Endothelial cell of umbilical vein (primary cell): ENCODE measurements at regions of chr11 and their contacts with region 1.

Region 1: GRCh38 chr11:57456960-57457642 is 3.2 kb upstream of the RTN4RL2 start:
- DNase-seq: peak; percentile 79
- H3K4me3 ChIP-seq: no peak overlapping the region
- H3K27ac ChIP-seq: no peak overlapping the region
- H3K4me1 ChIP-seq: peaks cover 14% of the 10 kb centered on the region
- H3K27me3 ChIP-seq: peaks cover 29 to 39% of the 10 kb centered on the region in 2 experiments
- CTCF ChIP-seq: peak; percentile 92 to 99
- POLR2A ChIP-seq: no peak

Region 2: DNA sequence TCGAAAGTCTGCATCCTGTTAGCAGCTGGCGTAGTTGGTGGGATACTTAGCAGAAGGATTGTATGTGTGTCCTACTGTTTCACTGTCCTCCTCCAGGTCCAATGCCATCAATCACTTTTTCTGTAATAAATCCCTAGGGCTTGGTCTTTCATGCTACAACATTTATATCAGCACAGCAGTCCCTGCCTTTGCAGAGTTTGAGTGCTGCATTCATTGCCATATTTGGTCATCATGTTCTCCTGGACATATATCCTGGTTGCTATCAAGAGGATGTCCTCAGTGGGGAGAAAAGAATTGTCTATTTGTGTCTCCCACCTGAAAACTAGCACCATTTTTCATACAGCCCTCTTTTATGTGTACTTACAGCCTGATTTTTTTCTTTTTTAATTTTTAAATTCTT is 401.3 kb before region 1 on chr11:
- CTCF ChIA-PET with region 1: no interaction called
- POLR2A ChIA-PET with region 1: no interaction called
- dilution Hi-C with region 1: no loop called
- intact Hi-C with region 1: no loop called
- DNase-seq: no peak
- H3K4me3 ChIP-seq: no peak overlapping the region
- H3K27ac ChIP-seq: no peak overlapping the region
- H3K4me1 ChIP-seq: no peaks in the 10 kb centered on the region
- H3K27me3 ChIP-seq: peaks cover 2 to 3% of the 10 kb centered on the region in 2 experiments
- CTCF ChIP-seq: no peak
- POLR2A ChIP-seq: no peak

Region 3: DNA sequence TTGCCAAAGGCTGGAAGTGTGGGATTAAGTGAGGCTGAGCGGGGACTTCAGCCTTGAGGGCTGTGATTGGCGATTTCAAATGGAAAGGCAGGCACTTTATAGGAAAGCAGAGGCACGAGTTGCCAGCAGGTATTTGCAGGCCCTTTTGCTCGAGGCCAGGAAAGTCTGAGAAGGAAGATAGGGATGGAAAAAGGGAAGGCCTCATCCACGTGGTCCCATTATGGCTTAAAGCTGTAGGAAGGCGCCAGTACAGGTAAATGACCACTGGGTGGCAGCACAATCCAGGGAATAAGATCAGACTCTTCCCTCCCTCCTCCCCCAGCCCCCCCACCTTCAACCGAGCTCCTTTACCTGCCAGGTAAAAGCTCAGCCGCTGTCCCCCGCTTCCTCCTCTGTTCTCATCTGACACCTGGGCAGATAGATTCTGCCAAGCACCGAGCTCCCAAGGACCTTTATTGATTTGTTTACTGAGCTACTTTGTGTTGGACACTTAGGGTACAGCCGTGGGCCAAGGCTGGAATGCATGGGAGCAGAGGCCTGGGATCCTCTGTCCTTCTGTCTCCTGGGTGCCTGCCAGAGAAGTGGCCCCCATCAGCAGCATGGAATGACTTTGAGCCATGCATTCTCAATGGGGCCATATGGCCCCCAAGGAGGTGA is 111.4 kb before region 1 on chr11:
- CTCF ChIA-PET with region 1: interaction called, 57 read pairs
- POLR2A ChIA-PET with region 1: no interaction called
- dilution Hi-C with region 1: no loop called
- intact Hi-C with region 1: loop called (anchors 1 kb)
- DNase-seq: peak; percentile 60
- H3K4me3 ChIP-seq: no peak overlapping the region
- H3K27ac ChIP-seq: no peak overlapping the region
- H3K4me1 ChIP-seq: no peaks in the 10 kb centered on the region
- H3K27me3 ChIP-seq: no peaks in the 10 kb centered on the region
- CTCF ChIP-seq: peak; percentile 49 to 71
- POLR2A ChIP-seq: no peak

Region 4: GRCh38 chr11:57387289-57388030 is 69.6 kb before region 1 on chr11:
- CTCF ChIA-PET with region 1: interaction called, 15 read pairs
- POLR2A ChIA-PET with region 1: no interaction called
- dilution Hi-C with region 1: no loop called
- intact Hi-C with region 1: loop called (anchors 1 kb)
- DNase-seq: peak; percentile 55
- H3K4me3 ChIP-seq: no peak overlapping the region
- H3K27ac ChIP-seq: no peak overlapping the region
- H3K4me1 ChIP-seq: no peaks in the 10 kb centered on the region
- H3K27me3 ChIP-seq: peaks cover 3 to 5% of the 10 kb centered on the region in 2 experiments
- CTCF ChIP-seq: peak in 1 of 2 donors; percentile 40
- POLR2A ChIP-seq: no peak

Region 5: DNA sequence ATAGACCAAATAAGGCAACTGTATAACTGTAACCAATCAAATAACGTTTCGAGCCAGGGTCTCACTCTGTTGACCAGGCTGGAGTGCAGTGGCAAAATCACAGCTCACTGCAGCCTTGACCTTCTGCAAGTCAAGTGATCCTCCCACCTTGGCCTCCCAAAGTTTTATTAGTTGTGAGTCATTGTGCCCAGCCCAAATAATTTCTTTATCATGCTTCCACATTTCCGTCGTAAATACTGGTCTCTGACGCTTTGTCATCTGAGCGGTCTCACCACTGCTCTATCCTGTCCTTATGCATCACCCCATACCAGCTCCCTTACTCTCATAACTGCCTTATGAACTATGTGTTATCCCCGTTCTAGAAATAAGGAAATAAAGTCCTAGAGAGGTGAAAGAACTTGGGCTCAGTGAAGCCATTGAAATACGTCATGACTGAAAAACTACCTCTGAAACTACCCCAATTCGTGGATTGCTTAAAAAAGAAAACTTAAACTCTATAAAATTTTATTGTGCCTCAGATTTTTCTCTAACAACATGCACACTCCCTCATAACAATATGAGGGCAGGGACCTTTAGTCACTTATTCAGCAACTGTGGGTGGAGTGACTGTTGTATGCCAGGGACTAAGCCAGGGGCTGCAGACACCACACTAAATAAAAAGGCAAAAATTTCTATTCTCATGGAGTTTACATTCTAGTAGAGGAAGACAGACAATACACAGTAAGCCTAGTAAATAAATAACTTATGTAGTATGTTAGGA is 12.6 kb before region 1 on chr11:
- CTCF ChIA-PET with region 1: interaction called, 13 read pairs
- POLR2A ChIA-PET with region 1: no interaction called
- dilution Hi-C with region 1: no loop called
- intact Hi-C with region 1: no loop called
- DNase-seq: no peak
- H3K4me3 ChIP-seq: no peak overlapping the region
- H3K27ac ChIP-seq: no peak overlapping the region
- H3K4me1 ChIP-seq: no peaks in the 10 kb centered on the region
- H3K27me3 ChIP-seq: peaks cover 0 to 2% of the 10 kb centered on the region in 2 experiments
- CTCF ChIP-seq: no peak
- POLR2A ChIP-seq: no peak

Region 6: DNA sequence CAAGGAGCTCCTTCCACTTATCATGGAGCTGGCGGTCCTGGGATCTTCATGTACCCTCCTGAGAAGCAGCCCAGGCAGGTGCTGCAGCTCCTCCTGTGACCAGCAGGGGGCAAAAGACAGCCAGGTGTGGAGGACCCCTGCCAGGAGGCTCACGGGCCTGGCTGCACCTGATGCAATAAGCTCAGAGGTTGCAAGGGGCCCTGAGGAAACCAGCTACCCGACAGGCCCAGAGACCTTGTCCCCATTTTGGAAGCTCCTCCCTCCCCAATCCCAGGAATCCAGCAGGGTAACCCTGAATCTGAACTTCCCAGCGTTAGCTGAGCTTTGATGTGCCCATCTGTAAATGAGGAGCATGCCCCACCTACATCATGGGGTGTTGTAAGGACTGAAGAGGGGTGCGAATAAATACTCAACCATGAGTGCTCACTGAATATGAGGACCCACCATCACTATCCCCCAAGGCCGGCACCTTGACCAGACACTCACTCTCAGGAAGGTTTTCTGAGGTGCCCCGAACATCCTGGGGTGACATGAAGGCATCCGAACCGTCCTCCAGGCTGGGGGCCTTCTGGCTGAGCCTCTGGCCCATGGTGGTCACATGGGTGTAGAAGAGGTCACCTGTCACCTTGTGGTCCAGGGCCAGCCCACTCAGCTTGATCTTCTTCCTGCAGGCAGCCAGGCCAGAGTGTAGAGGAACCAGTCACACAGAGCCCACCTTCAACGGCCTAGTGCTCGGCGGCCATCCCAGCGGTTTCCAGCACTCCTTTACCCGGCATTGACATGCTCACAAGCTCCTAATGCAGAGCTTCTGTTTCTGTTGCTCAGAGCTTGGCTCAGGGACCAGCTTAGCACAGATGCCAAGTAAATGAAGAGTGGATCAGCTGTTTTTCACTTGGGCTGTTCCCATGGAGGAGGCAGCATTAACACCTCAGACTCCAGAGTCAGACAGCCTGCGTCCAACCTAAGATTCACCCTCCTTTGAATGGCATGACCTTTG is 36.7 kb after region 1 on chr11:
- CTCF ChIA-PET with region 1: interaction called, 29 read pairs
- POLR2A ChIA-PET with region 1: no interaction called
- dilution Hi-C with region 1: no loop called
- intact Hi-C with region 1: no loop called
- DNase-seq: peak; percentile 42
- H3K4me3 ChIP-seq: no peak overlapping the region
- H3K27ac ChIP-seq: no peak overlapping the region
- H3K4me1 ChIP-seq: no peaks in the 10 kb centered on the region
- H3K27me3 ChIP-seq: no peaks in the 10 kb centered on the region
- CTCF ChIP-seq: peak; percentile 85 to 91
- POLR2A ChIP-seq: no peak

Region 7: GRCh38 chr11:57567515-57568329 is 110.6 kb after region 1 on chr11 and contains the start of gene UBE2L6:
- CTCF ChIA-PET with region 1: interaction called, 11 read pairs
- POLR2A ChIA-PET with region 1: no interaction called
- dilution Hi-C with region 1: no loop called
- intact Hi-C with region 1: no loop called
- DNase-seq: no peak
- H3K4me3 ChIP-seq: peak within 1 kb of the TSS; percentile 56 to 86 (median 76)
- H3K27ac ChIP-seq: no peak within 1 kb of the TSS
- H3K4me1 ChIP-seq: peaks cover 10% of the 10 kb centered on the region
- H3K27me3 ChIP-seq: no peaks in the 10 kb centered on the region
- CTCF ChIP-seq: peak; percentile 33 to 93
- POLR2A ChIP-seq: no peak
- total RNA-seq, gene UBE2L6: 10.8 and 22.3 TPM in 2 replicates